ENCODE measurements at regions of chr1 and their contacts with region 1.

Region 1: GRCh38 chr1:185670187-185670627 is 64.0 kb upstream of the HMCN1 start:
- DNase-seq: peak; percentile 54
- ATAC-seq: 0 out of 2 replicates have a peak, but pooled peaks have one; percentile 35
- H3K4me3 ChIP-seq: no peak overlapping the region
- H3K27ac ChIP-seq: no peak overlapping the region
- H3K4me1 ChIP-seq: peaks cover 6% of the 10 kb centered on the region; the same call in 1 of the 2 replicates
- H3K27me3 ChIP-seq: no peaks in the 10 kb centered on the region
- CTCF ChIP-seq: peak; percentile 68

Region 2: GRCh38 chr1:185170291-185170848 is 499.8 kb before region 1 on chr1:
- CTCF ChIA-PET with region 1: no interaction called
- POLR2A ChIA-PET with region 1: no interaction called
- intact Hi-C with region 1: loop called (anchors 10 kb)
- DNase-seq: peak; percentile 58
- ATAC-seq: peak; percentile 67
- H3K4me3 ChIP-seq: no peak overlapping the region
- H3K27ac ChIP-seq: no peak overlapping the region
- H3K4me1 ChIP-seq: no peaks in the 10 kb centered on the region
- H3K27me3 ChIP-seq: no peaks in the 10 kb centered on the region
- CTCF ChIP-seq: peak; percentile 89